ENCODE measurements at regions of chr2 and their contacts with region 1.

Region 1: GRCh38 chr2:104016801-104017200 is 837.1 kb upstream of the POU3F3 start:
- DNase-seq: no peak
- ATAC-seq: no peak
- H3K4me3 ChIP-seq: no peak overlapping the region
- H3K27ac ChIP-seq: no peak overlapping the region
- H3K4me1 ChIP-seq: no peaks in the 10 kb centered on the region
- H3K27me3 ChIP-seq: peaks cover 0 to under 1% of the 10 kb centered on the region in 2 experiments; a peak in 1 of 5 replicates
- CTCF ChIP-seq: no peak
- EP300 ChIP-seq: no peak
- POLR2A ChIP-seq: no peak
- RAD21 ChIP-seq: no peak

Region 2: GRCh38 chr2:104078431-104079162 is 61.8 kb after region 1 on chr2:
- CTCF ChIA-PET with region 1: no interaction called
- POLR2A ChIA-PET with region 1: no interaction called
- in situ Hi-C with region 1: loop called (anchors 10 kb)
- intact Hi-C with region 1: no loop called
- DNase-seq: no peak
- ATAC-seq: peak; percentile 93
- H3K4me3 ChIP-seq: no peak overlapping the region
- H3K27ac ChIP-seq: no peak overlapping the region
- H3K4me1 ChIP-seq: no peaks in the 10 kb centered on the region
- H3K27me3 ChIP-seq: no peaks in the 10 kb centered on the region
- CTCF ChIP-seq: peak; percentile 41; the same call in 1 of the 2 replicates
- EP300 ChIP-seq: no peak
- POLR2A ChIP-seq: no peak
- RAD21 ChIP-seq: no peak

Region 3: GRCh38 chr2:104088745-104089144 is 71.9 kb after region 1 on chr2:
- CTCF ChIA-PET with region 1: no interaction called
- POLR2A ChIA-PET with region 1: no interaction called
- in situ Hi-C with region 1: no loop called
- intact Hi-C with region 1: no loop called
- DNase-seq: no peak
- ATAC-seq: no peak
- H3K4me3 ChIP-seq: no peak overlapping the region
- H3K27ac ChIP-seq: no peak overlapping the region
- H3K4me1 ChIP-seq: no peaks in the 10 kb centered on the region
- H3K27me3 ChIP-seq: no peaks in the 10 kb centered on the region
- CTCF ChIP-seq: no peak
- EP300 ChIP-seq: no peak
- POLR2A ChIP-seq: no peak
- RAD21 ChIP-seq: no peak

Region 4: DNA sequence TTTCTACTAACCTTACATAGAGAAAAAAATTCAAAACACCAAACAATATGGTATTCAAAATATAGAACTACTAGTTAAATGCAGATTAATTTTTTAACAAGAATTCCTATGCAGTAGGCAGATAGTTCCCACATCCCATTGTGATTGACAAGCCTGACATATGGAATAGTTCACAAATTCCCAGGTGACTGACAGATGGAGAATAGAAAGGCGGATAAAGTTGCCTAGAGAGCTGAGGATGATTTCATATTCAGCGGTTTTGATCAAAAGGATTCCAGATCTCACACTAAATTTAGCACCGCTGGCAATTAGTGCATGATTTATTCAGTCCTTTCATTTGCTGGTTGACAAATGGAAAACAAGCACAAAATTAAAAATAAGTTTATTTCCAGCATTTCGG is 103.4 kb after region 1 on chr2:
- CTCF ChIA-PET with region 1: no interaction called
- POLR2A ChIA-PET with region 1: no interaction called
- in situ Hi-C with region 1: no loop called
- intact Hi-C with region 1: no loop called
- DNase-seq: no peak
- ATAC-seq: no peak
- H3K4me3 ChIP-seq: no peak overlapping the region
- H3K27ac ChIP-seq: no peak overlapping the region
- H3K4me1 ChIP-seq: no peaks in the 10 kb centered on the region
- H3K27me3 ChIP-seq: no peaks in the 10 kb centered on the region
- CTCF ChIP-seq: no peak
- EP300 ChIP-seq: no peak
- POLR2A ChIP-seq: no peak
- RAD21 ChIP-seq: no peak

Measured in HepG2 (cell line).